ENCODE measurements at regions of chr3 and their contacts with region 1.

Region 1: GRCh38 chr3:71690341-71690841 is 34.8 kb downstream of the EIF4E3 start:
- DNase-seq: no peak

Region 2: DNA sequence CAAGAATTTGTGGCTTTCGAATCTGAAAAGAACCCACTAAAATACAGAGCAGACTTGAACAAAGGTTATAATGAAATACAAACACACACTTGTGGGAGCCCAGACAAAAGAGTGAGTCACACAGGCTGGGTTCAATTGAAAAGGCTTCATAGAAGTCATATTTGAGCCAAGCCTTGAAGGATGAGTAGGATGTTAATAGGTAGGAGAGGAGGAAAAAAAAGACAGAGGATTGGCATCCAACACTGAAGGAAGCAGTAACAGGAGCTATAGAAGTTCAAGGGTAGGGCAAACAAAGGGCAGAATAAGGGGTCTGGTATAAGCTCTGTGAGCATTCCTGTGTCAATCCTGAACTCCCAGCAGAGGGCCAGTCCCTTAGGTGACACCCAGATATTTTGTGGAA is 432.3 kb before region 1 on chr3:
- in situ Hi-C with region 1: no loop called
- DNase-seq: no peak

Region 3: GRCh38 chr3:71591101-71591500 is 99.3 kb before region 1 on chr3:
- in situ Hi-C with region 1: loop called (anchors 5 kb)
- DNase-seq: no peak

Region 4: GRCh38 chr3:71728632-71729342 is 38.4 kb after region 1 on chr3:
- in situ Hi-C with region 1: no loop called
- DNase-seq: peak; percentile 76

Region 5: GRCh38 chr3:71784914-71785531 is 94.6 kb after region 1 on chr3 and contains the start of gene PROK2:
- in situ Hi-C with region 1: no loop called
- DNase-seq: no peak
- total RNA-seq, gene PROK2: not detected in 2 replicates